Stomach (tissue), 19 donors: ENCODE measurements at regions of chr2 and their contacts with region 1.

Region 1: GRCh38 chr2:20962939-20963557 is 80.8 kb downstream of the APOB start:
- DNase-seq: peak; percentile 79 to 88
- H3K4me3 ChIP-seq: no peak overlapping the region
- H3K27ac ChIP-seq: no peak overlapping the region
- H3K4me1 ChIP-seq: peaks cover 0 to 7% (median 0%) of the 10 kb centered on the region in 4 donors
- H3K27me3 ChIP-seq: peaks cover 0 to 4% (median 0%) of the 10 kb centered on the region in 3 donors
- CTCF ChIP-seq: peak in 5 of 7 experiments; percentile 69 to 87 (median 80)
- EP300 ChIP-seq: no peak
- POLR2A ChIP-seq: no peak

Region 2: DNA sequence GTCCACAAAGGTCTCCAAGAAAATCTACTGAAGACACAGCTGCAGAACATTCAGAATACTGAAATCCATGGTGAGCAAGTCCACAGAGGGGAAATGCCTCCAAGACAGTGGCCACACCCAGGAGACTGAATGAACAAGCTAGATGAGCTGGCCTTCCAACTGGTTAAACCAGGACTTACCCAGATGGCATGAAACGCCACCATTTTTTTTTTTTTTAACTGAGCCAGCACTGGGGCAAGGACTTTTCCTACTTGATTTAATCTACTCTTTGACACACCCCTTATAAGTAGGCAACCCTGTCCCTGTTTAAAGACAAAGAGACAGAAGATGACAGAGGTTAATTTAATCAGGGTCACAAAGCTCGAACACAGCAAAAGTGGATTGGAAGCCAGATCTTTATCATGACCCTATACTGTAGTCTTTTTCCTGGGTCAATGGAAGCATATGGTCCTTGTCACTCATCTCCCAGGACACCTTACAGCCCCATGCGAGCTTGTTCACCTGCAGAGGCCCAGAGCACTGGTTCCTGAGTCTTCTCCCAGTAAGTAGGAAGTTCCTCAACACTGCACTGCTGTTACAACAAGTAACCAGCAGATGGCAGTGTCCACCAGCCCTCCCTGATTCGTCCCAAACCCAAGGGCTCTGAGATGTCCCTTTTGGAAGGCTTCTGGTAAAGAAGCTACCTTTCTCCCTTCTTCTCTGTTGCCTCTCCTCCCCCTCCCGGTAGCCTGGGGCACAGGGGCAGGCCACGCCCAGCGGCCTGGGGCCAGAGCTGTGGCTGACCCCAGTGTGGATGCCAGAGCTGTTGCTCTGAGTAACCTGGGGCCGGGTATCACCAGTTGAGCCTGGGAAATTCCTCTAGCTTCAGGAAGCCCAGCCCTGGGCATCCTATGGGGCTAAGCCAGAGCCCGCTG is 301.7 kb before region 1 on chr2:
- intact Hi-C with region 1: loop called (anchors 5 kb)
- DNase-seq: peak; percentile 72 to 91
- H3K4me3 ChIP-seq: no peak overlapping the region
- H3K27ac ChIP-seq: no peak overlapping the region
- H3K4me1 ChIP-seq: peaks cover 16 to 29% (median 23%) of the 10 kb centered on the region in 4 donors
- H3K27me3 ChIP-seq: peaks cover 7 to 61% (median 36%) of the 10 kb centered on the region in 3 donors
- CTCF ChIP-seq: peak in 6 of 7 experiments; percentile 20 to 97 (median 96)
- EP300 ChIP-seq: no peak
- POLR2A ChIP-seq: no peak

Region 3: GRCh38 chr2:20781656-20782265 is 181.3 kb before region 1 on chr2:
- intact Hi-C with region 1: loop called (anchors 10 kb)
- DNase-seq: peak in 1 of 2 donors; percentile 16
- H3K4me3 ChIP-seq: no peak overlapping the region
- H3K27ac ChIP-seq: no peak overlapping the region
- H3K4me1 ChIP-seq: no peaks in the 10 kb centered on the region
- H3K27me3 ChIP-seq: no peaks in the 10 kb centered on the region
- CTCF ChIP-seq: peak in 4 of 7 experiments; percentile 41 to 49 (median 48)
- EP300 ChIP-seq: no peak
- POLR2A ChIP-seq: no peak

Region 4: GRCh38 chr2:21025690-21026478 is 62.8 kb after region 1 on chr2:
- intact Hi-C with region 1: no loop called
- DNase-seq: no peak
- H3K4me3 ChIP-seq: no peak overlapping the region
- H3K27ac ChIP-seq: no peak overlapping the region
- H3K4me1 ChIP-seq: no peaks in the 10 kb centered on the region
- H3K27me3 ChIP-seq: no peaks in the 10 kb centered on the region
- CTCF ChIP-seq: no peak
- EP300 ChIP-seq: no peak
- POLR2A ChIP-seq: no peak

Region 5: DNA sequence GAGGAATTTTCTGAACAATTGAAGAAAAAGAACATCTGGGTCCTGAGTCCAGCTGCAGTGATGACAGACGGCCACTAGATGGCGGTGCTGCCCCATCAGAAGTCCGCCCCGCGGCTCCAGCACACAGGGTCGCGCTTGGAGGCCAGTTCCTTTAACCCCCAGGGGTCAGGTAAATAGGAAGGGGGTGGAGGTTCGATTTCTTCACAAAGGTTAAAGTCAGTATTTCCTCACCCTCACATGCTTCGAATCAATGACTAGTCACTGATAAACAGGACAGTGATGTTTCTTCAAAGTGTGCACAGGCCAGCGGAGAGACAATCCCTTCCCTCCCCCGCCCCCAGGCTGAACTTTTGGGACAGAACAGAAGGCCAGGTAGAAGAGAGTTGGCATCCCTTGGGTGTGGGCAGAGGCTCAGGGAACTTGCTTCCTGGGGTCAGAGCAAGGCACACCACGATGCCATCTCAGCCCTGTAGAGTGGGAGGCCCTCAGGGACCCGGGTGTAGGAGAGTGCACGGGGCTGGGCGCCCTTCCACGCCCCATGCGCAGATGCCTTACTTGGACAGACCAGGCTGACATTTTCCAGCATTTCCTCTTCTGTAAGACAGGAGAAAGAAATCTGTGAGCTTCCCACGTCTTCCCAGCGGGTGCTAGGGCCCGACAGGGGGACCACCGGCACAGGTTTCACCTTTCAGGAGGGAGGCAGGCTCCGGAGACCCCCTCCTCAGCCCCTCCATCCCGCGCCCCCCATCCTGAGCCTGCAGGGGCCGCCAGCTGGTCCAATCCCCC is 80.1 kb after region 1 on chr2:
- intact Hi-C with region 1: no loop called
- DNase-seq: peak; percentile 74 to 87
- H3K4me3 ChIP-seq: peak overlapping the region; percentile 5 to 34 (median 16)
- H3K27ac ChIP-seq: no peak overlapping the region
- H3K4me1 ChIP-seq: peaks cover 12 to 38% (median 24%) of the 10 kb centered on the region in 4 donors
- H3K27me3 ChIP-seq: peaks cover 0 to 36% (median 18%) of the 10 kb centered on the region in 3 donors
- CTCF ChIP-seq: peak in 5 of 7 experiments; percentile 84 to 97 (median 96)
- EP300 ChIP-seq: no peak
- POLR2A ChIP-seq: no peak